Breast epithelium (tissue), 4 donors: ENCODE measurements at regions of chr2 and their contacts with region 1.

Region 1: DNA sequence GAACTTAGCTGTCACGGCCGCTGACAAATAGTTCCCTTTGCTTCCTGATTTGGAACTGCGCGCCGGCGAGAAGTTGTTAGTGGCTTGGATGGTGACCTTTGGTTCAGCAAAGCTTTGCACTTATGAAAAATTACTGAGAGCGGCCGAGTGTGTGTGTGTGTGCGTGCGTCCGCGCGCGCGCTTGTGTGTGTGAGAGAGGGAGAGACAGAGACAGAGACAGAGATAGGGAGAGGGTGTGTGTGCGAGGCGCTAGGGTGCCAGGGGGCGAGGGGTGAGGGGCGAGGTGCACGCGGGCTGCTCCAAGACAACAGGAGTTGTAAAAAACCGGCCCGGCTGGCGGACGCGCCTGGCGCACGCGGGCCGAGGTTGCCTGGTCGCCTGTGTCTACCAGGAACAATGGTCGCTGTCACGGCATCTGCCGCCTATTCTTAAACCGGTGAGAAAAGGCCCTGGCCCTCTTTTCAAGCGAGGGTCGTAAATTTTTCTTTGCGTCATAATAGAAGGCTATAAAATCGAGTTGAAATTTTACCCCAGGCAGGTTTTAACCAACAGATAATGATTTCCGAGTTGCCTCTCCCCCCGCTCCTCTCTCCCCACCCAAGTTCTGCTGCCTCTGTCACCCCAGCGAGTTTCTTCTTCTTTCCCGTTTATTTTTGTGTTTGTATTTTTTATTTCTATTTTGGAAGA is 535 bp downstream of the HOXD3 start:
- DNase-seq: no peak
- H3K4me3 ChIP-seq: peak overlapping the region in 2 of 3 donors; percentile 41 to 47
- H3K27ac ChIP-seq: no peak overlapping the region
- H3K4me1 ChIP-seq: no peaks in the 10 kb centered on the region
- H3K27me3 ChIP-seq: peaks cover 0 to 82% of the 10 kb centered on the region in 2 donors
- CTCF ChIP-seq: no peak
- POLR2A ChIP-seq: no peak

Region 2: DNA sequence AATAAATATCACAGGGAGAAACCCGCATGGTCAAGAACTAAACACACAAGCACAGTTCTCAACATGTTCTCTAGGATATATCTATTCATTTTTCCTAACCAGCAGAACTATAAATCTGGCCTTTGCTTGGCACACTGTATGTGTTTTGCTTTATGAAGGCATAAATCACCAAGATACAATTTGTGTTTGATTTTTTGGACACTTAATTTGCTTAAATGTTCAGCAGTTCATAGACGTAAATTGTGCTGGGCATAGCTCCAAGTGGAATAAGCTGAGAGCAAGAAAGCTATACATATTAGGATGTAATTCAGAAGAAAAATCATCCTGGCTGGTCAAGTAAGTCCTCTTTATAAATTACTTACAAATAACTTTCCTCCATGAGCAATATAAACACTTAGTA is 634.6 kb before region 1 on chr2:
- intact Hi-C with region 1: no loop called
- DNase-seq: no peak
- H3K4me3 ChIP-seq: no peak overlapping the region
- H3K27ac ChIP-seq: no peak overlapping the region
- H3K4me1 ChIP-seq: no peaks in the 10 kb centered on the region
- H3K27me3 ChIP-seq: no peaks in the 10 kb centered on the region
- CTCF ChIP-seq: no peak
- POLR2A ChIP-seq: no peak

Region 3: DNA sequence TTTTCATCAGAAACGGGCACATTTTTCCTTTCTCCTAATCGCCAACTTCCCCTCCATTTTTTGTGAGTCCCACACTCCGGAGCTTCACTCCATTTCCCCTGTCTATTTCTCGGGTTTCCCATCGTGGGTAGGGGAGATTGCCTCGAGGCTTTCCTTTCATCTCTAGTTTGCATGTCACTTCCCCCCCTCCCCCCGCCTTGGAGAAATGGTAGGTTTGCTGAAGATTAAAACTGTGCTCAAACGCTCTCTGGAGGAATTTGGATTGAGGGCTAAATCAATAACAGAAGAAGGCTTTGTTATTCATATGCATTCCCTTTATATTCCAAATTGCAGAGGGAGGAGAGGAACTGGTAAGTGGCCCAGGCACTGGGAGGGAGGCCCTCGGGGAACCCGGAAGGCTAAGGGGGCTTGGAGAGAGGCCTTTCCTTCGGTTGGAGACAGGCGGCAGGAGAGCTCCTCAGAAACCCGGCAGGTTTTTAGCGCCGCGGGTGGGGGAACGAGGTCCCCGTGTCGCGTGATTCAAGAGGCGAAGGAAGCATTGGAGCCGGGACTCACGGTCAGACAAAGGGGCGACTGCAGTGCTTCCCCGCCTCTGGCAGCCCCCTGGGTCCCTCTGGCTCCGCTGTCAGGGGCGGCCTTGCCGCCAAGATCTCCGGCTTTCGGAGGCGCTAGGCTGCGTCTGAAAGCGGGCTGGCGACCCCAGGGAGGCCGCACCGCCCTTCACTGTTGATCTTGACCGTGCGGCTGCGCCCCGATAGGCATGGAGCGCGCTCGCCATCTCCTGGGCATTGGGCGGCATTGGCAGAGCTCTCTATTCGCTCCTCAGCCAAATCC is 60.4 kb before region 1 on chr2:
- intact Hi-C with region 1: no loop called
- DNase-seq: no peak
- H3K4me3 ChIP-seq: peak overlapping the region; percentile 19 to 58 (median 38)
- H3K27ac ChIP-seq: no peak overlapping the region
- H3K4me1 ChIP-seq: peaks cover 5 to 11% of the 10 kb centered on the region in 2 donors
- H3K27me3 ChIP-seq: peaks cover 38 to 99% of the 10 kb centered on the region in 2 donors
- CTCF ChIP-seq: peak; percentile 51 to 75 (median 70)
- POLR2A ChIP-seq: no peak

Region 4: DNA sequence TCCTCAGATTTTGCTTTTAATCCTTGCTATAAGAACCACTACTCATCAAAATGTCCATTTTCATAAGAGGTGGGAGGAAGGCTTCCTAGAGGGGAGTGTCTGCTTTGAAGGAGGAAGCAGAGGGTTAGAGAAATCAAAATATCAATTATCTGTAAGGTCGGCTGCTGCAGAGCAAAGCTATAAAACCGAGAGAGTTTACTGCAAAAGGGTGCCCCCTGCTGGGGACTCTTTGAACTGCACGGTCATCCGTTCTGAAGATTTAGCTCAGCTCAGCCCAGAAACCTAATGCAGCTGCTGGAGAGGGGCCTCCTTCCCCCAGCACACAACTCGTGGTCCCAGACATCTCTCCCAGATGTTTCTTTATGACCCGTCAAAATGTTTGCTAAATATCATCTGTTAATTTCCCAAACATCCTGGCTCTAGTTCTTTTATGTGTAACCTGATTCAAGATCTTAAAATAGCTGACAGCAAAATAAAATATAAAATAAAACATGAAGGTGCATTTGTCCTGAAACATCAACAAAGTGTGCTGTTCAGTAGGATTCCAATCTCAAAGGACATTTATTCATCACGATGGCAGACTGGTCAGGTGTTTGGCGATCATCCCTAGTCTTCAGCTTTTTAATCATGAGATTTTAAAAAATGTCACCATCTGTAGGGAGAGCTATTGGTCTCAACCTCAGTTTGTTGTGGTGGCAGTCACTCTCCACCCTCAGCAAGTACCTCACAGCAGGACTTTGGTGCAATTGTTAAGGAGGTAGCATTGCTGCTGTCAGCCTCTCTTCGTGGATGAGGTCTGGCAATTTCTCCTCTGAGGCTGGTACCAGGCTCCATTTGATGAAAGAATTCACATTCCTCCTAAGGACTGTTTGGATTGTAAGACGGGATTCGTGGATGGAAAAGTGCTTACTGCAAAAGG is 297.5 kb after region 1 on chr2:
- intact Hi-C with region 1: loop called (anchors 10 kb)
- DNase-seq: peak; percentile 57 to 87
- H3K4me3 ChIP-seq: no peak overlapping the region
- H3K27ac ChIP-seq: peak overlapping the region in 1 of 2 donors; percentile 84
- H3K4me1 ChIP-seq: no peaks in the 10 kb centered on the region
- H3K27me3 ChIP-seq: no peaks in the 10 kb centered on the region
- CTCF ChIP-seq: peak; percentile 75 to 92 (median 84)
- POLR2A ChIP-seq: no peak

Region 5: GRCh38 chr2:176544991-176545956 is 387.6 kb after region 1 on chr2:
- intact Hi-C with region 1: loop called (anchors 10 kb)
- DNase-seq: no peak
- H3K4me3 ChIP-seq: no peak overlapping the region
- H3K27ac ChIP-seq: no peak overlapping the region
- H3K4me1 ChIP-seq: no peaks in the 10 kb centered on the region
- H3K27me3 ChIP-seq: no peaks in the 10 kb centered on the region
- CTCF ChIP-seq: no peak
- POLR2A ChIP-seq: no peak